Mammary epithelial cell (primary cell): ENCODE measurements at regions of chr6 and their contacts with region 1.

Region 1: GRCh38 chr6:2952557-2953095 is 18.7 kb downstream of the SERPINB6 start:
- DNase-seq: peak; percentile 59
- H3K4me3 ChIP-seq: no peak overlapping the region
- H3K27ac ChIP-seq: no peak overlapping the region
- H3K4me1 ChIP-seq: no peaks in the 10 kb centered on the region
- H3K27me3 ChIP-seq: no peaks in the 10 kb centered on the region
- CTCF ChIP-seq: peak; percentile 79 to 93

Region 2: GRCh38 chr6:2962636-2963035 is 10.0 kb after region 1 on chr6:
- CTCF ChIA-PET with region 1: interaction called, 12 read pairs
- dilution Hi-C with region 1: no loop called
- in situ Hi-C with region 1: no loop called
- intact Hi-C with region 1: no loop called
- DNase-seq: no peak
- H3K4me3 ChIP-seq: no peak overlapping the region
- H3K27ac ChIP-seq: no peak overlapping the region
- H3K4me1 ChIP-seq: peaks cover 12% of the 10 kb centered on the region
- H3K27me3 ChIP-seq: no peaks in the 10 kb centered on the region
- CTCF ChIP-seq: no peak

Region 3: GRCh38 chr6:3433005-3433404 is 480.4 kb after region 1 on chr6:
- CTCF ChIA-PET with region 1: no interaction called
- dilution Hi-C with region 1: no loop called
- in situ Hi-C with region 1: no loop called
- intact Hi-C with region 1: no loop called
- DNase-seq: no peak
- H3K4me3 ChIP-seq: peak overlapping the region in 1 of 3 experiments; percentile 12
- H3K27ac ChIP-seq: peak overlapping the region; percentile 64
- H3K4me1 ChIP-seq: peaks cover 41% of the 10 kb centered on the region
- H3K27me3 ChIP-seq: no peaks in the 10 kb centered on the region
- CTCF ChIP-seq: no peak